Naive thymus-derived CD8-positive, alpha-beta T cell (primary cell): ENCODE measurements at regions of chr12 and their contacts with region 1.

Region 1: DNA sequence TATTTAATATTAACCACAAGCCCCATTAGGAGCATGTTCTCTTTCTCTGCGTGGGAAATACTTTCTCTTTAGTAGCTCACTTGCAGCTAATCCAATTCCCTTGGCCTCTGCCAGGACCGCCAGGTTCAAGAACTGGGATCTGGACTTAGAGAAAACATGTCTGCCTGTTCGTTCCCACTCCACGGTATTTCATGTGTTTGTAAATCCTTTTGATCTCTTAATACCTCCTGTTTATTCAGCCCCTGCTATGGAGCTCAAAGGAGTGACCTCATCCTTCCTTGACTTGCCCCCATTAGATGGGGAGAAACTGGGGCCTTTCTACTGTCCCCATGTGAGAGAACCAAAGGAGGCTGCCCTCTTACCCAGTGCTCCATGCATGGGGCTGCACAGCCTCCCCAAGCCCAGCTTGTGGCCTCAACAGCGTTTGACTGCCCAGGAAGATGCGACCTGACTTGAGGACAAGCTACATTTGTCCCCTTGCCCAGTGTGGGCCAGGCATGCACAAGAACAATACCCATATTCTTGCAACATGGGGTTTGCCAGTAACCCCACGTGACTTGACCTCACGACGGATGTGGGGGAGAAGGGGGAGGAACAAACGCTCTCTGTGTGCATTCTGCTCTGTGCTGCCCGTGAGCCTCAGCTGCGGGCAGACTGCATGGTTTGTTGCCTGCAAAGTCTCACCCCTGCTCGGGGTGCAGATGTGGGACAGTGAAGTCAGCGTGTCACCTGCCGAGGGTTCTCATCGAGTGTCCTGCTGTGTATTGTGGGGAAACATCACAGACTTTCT is 30.3 kb downstream of the CD9 start:
- DNase-seq: peak; percentile 35 to 87 (median 74)
- ATAC-seq: peak; percentile 96 to 98
- H3K4me3 Mint-ChIP-seq: peak overlapping the region; percentile 23 to 83 (median 73)
- H3K27ac Mint-ChIP-seq: peak overlapping the region; percentile 91 to 99 (median 94)
- H3K4me1 Mint-ChIP-seq: peaks cover 22 to 49% (median 43%) of the 10 kb centered on the region in 4 donors
- H3K27me3 Mint-ChIP-seq: peaks cover 0 to 2% (median 0%) of the 10 kb centered on the region in 5 donors

Region 2: DNA sequence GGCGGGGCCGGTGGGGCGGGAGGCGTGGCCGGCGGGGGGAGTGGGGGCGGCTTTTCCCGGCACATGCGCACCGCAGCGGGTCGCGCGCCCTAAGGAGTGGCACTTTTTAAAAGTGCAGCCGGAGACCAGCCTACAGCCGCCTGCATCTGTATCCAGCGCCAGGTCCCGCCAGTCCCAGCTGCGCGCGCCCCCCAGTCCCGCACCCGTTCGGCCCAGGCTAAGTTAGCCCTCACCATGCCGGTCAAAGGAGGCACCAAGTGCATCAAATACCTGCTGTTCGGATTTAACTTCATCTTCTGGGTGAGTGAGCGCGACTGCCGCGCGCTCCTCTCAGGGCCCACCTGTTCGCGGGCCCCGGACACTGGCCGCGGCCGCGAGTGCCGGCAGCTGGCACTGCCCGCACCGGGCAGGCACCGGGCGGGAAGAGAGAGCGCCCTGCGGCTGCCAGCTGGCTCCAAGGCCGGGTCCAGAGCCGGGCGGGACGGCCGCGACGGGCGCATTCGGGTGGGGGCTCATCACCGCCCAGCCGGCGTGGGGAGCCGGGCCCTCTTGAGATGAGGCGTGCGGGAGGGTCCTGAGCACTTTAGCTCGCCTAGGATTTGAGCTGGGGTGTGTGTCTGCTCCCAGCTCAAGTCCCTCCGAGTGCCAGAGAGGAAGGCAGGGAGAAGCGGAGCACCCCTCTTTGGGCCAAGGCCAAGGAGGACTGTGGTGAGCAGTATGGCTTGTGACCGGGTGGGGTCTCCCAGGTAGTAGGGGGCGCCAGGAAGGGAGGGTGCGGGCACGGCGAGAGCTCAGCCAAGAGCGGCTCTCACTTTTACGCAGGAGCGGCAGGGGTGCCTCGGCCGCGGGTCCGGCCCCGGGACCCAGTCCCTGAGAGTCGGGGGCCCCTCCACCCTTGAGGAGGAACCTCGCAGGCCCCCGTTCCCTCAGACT is 30.0 kb before region 1 on chr12 and contains the start of gene CD9:
- POLR2A ChIA-PET with region 1: interaction called, 10 read pairs
- DNase-seq: peak; percentile 14 to 69 (median 32)
- ATAC-seq: peak; percentile 66 to 71
- H3K4me3 Mint-ChIP-seq: peak within 1 kb of the TSS; percentile 65 to 84 (median 79)
- H3K27ac Mint-ChIP-seq: peak within 1 kb of the TSS in 8 of 10 donors; percentile 43 to 83 (median 60)
- H3K4me1 Mint-ChIP-seq: peaks cover 16 to 47% (median 39%) of the 10 kb centered on the region in 4 donors
- H3K27me3 Mint-ChIP-seq: peaks cover 3 to 22% (median 20%) of the 10 kb centered on the region in 5 donors
- polyA plus RNA-seq, gene CD9: 23.4 to 43.4 (median 41.7) TPM

Region 3: GRCh38 chr12:6263931-6264330 is 33.4 kb after region 1 on chr12:
- POLR2A ChIA-PET with region 1: no interaction called
- DNase-seq: no peak
- ATAC-seq: no peak
- H3K4me3 Mint-ChIP-seq: no peak overlapping the region
- H3K27ac Mint-ChIP-seq: no peak overlapping the region
- H3K4me1 Mint-ChIP-seq: peaks cover 0 to 8% (median 2%) of the 10 kb centered on the region in 4 donors
- H3K27me3 Mint-ChIP-seq: peaks cover 0 to 7% (median 5%) of the 10 kb centered on the region in 5 donors

Region 4: GRCh38 chr12:6507102-6507998 is 276.8 kb after region 1 on chr12:
- POLR2A ChIA-PET with region 1: no interaction called
- DNase-seq: no peak
- ATAC-seq: no peak
- H3K4me3 Mint-ChIP-seq: no peak overlapping the region
- H3K27ac Mint-ChIP-seq: peak overlapping the region in 1 of 10 donors; percentile 66
- H3K4me1 Mint-ChIP-seq: peaks cover 0 to 8% (median 7%) of the 10 kb centered on the region in 4 donors
- H3K27me3 Mint-ChIP-seq: no peaks in the 10 kb centered on the region